H1 (cell line): ENCODE measurements at regions of chr4 and their contacts with region 1.

Region 1: DNA sequence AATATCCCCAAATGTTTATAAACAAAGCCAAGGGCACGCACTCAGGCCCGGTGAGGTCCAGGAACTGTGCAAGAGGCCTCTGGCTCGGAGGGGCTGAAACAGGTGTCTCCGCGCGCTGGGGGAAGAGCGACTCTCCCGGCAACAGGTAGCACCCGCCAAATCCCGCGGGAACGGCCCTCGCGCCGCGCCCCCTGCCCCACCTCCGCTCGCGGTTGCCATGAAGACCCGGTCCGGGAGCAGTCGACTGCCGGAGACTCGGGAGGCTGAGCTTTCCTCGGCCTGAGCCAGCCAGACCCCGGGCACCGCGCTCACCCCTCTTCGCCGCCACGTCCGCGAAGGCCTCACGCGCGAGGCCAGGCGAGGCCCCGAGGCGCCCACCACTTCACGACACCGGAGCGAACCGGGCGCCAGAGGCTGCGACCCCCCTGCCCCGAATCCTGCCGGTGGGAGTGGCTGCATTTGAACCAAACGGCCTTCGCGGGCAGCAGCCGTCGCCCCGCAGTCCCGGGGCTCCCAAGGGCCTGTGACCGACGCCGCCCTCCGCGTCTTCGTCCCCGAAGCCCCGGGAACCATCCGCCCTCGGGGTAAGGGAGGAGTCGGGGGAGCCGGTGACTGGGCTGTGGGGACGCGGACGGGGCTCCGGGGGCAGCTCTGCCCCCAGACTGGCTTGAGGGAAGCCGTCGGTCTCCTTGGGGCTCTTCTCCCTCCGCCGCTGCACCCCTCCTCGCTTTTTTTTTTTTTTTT is at the start of gene NSUN7:
- DNase-seq: peak; percentile 73 to 93
- H3K4me3 ChIP-seq: peak within 1 kb of the TSS; percentile 70 to 95 (median 90)
- H3K27ac ChIP-seq: peak within 1 kb of the TSS; percentile 78
- H3K4me1 ChIP-seq: peaks cover 0 to 4% (median 0%) of the 10 kb centered on the region in 4 experiments; a peak in 2 of 7 replicates
- H3K27me3 ChIP-seq: no peaks in the 10 kb centered on the region
- CTCF ChIP-seq: no peak
- EP300 ChIP-seq: no peak
- POLR2A ChIP-seq: peak; percentile 83
- RAD21 ChIP-seq: no peak; a peak in 1 of 4 replicates
- total RNA-seq, gene NSUN7: 24.4 and 26.3 TPM in 2 replicates

Region 2: GRCh38 chr4:40763228-40763716 is 13.4 kb after region 1 on chr4:
- CTCF ChIA-PET with region 1: no interaction called
- POLR2A ChIA-PET with region 1: interaction called, 10 read pairs
- DNase-seq: no peak
- H3K4me3 ChIP-seq: no peak overlapping the region
- H3K27ac ChIP-seq: no peak overlapping the region
- H3K4me1 ChIP-seq: 0 out of 7 replicates have a peak, but pooled peaks cover 0 to 2% (median 0%) of the 10 kb centered on the region in 4 experiments
- H3K27me3 ChIP-seq: no peaks in the 10 kb centered on the region
- CTCF ChIP-seq: no peak
- EP300 ChIP-seq: no peak
- POLR2A ChIP-seq: no peak
- RAD21 ChIP-seq: no peak